K562 (cell line): ENCODE measurements at regions of chr6 and their contacts with region 1.

Region 1: DNA sequence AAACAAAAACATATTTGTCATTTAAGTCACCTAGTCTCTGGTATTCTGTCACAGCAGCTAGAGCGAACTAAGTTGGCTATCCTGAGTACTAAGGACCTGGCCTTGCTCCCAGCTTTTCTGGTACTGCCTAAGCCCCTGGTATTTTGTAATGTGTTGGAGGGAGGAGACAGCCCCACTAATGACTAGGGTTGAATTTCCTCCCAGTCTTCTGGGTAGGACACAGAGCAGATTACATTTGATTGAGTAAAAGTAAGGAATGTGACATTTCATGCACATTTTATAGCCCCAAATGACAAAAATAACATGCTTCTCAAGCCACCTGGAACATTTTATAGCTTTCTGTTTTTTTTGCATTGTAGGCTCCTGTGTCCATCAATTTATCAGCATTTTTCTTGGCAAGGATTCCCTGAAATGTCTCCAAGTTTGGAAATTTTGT is 47.9 kb upstream of the DDR1 start:
- DNase-seq: no peak
- ATAC-seq: no peak
- H3K4me3 ChIP-seq: no peak overlapping the region
- H3K27ac ChIP-seq: no peak overlapping the region
- H3K4me1 ChIP-seq: peaks cover 23 to 24% of the 10 kb centered on the region in 2 experiments; a peak in 4 of 5 replicates
- H3K27me3 ChIP-seq: no peaks in the 10 kb centered on the region
- CTCF ChIP-seq: no peak
- EP300 ChIP-seq: no peak
- POLR2A ChIP-seq: no peak
- RAD21 ChIP-seq: no peak

Region 2: GRCh38 chr6:30234356-30234755 is 602.1 kb before region 1 on chr6:
- CTCF ChIA-PET with region 1: no interaction called
- POLR2A ChIA-PET with region 1: no interaction called
- in situ Hi-C with region 1: no loop called
- intact Hi-C with region 1: no loop called
- DNase-seq: no peak
- ATAC-seq: no peak
- H3K4me3 ChIP-seq: no peak overlapping the region
- H3K27ac ChIP-seq: no peak overlapping the region
- H3K4me1 ChIP-seq: no peaks in the 10 kb centered on the region
- H3K27me3 ChIP-seq: peaks cover 11 to 21% of the 10 kb centered on the region in 2 experiments; a peak in 4 of 5 replicates
- CTCF ChIP-seq: no peak
- EP300 ChIP-seq: no peak
- POLR2A ChIP-seq: no peak
- RAD21 ChIP-seq: no peak

Region 3: DNA sequence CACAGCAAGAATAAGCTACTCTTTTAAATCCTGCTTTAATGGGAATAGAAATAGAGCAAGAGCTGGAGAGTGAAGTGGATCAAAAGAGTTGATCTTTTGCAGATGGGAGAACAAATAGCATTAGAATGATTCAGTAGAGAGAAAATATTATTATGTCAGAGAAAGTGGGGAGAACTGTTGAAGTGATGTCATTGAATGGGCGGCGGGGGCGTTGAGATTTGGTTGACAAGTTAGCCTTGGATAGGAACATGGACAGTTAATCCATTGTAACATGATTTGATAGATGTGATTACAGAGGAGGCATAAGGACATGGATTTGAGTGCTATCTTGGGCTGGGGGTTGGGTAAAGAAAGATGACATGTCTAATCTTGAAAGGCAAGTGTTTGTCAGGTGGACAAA is 200.6 kb before region 1 on chr6:
- CTCF ChIA-PET with region 1: no interaction called
- POLR2A ChIA-PET with region 1: no interaction called
- in situ Hi-C with region 1: no loop called
- intact Hi-C with region 1: no loop called
- DNase-seq: no peak
- ATAC-seq: no peak
- H3K4me3 ChIP-seq: no peak overlapping the region
- H3K27ac ChIP-seq: no peak overlapping the region
- H3K4me1 ChIP-seq: peaks cover 0 to 9% of the 10 kb centered on the region in 2 experiments; a peak in 2 of 5 replicates
- H3K27me3 ChIP-seq: no peaks in the 10 kb centered on the region
- CTCF ChIP-seq: no peak
- EP300 ChIP-seq: no peak
- POLR2A ChIP-seq: no peak
- RAD21 ChIP-seq: no peak

Region 4: GRCh38 chr6:30870546-30870945 is 34.1 kb after region 1 on chr6:
- CTCF ChIA-PET with region 1: no interaction called
- POLR2A ChIA-PET with region 1: interaction called, 9 read pairs
- in situ Hi-C with region 1: loop called (anchors 5 kb)
- intact Hi-C with region 1: no loop called
- DNase-seq: peak in 1 of 4 experiments; percentile 3
- ATAC-seq: no peak
- H3K4me3 ChIP-seq: no peak overlapping the region
- H3K27ac ChIP-seq: no peak overlapping the region
- H3K4me1 ChIP-seq: peaks cover 20 to 22% of the 10 kb centered on the region in 2 experiments; a peak in 4 of 5 replicates
- H3K27me3 ChIP-seq: no peaks in the 10 kb centered on the region
- CTCF ChIP-seq: no peak
- EP300 ChIP-seq: no peak
- POLR2A ChIP-seq: no peak
- RAD21 ChIP-seq: no peak

Region 5: GRCh38 chr6:31007694-31008093 is 171.2 kb after region 1 on chr6:
- CTCF ChIA-PET with region 1: no interaction called
- POLR2A ChIA-PET with region 1: no interaction called
- in situ Hi-C with region 1: no loop called
- intact Hi-C with region 1: no loop called
- DNase-seq: no peak
- ATAC-seq: no peak
- H3K4me3 ChIP-seq: no peak overlapping the region
- H3K27ac ChIP-seq: no peak overlapping the region
- H3K4me1 ChIP-seq: no peaks in the 10 kb centered on the region; a peak in 1 of 5 replicates
- H3K27me3 ChIP-seq: peaks cover 37 to 40% of the 10 kb centered on the region in 2 experiments
- CTCF ChIP-seq: no peak
- EP300 ChIP-seq: no peak
- POLR2A ChIP-seq: no peak
- RAD21 ChIP-seq: no peak